ENCODE measurements at regions of chr2 and their contacts with region 1.

Region 1: GRCh38 chr2:8836971-8837794 is at the start of gene KIDINS220:
- DNase-seq: peak; percentile 85 to 93
- H3K4me3 ChIP-seq: peak within 1 kb of the TSS; percentile 87 to 92
- H3K27ac ChIP-seq: peak within 1 kb of the TSS; percentile 87 to 89
- H3K4me1 ChIP-seq: peaks cover 0 to 47% (median 21%) of the 10 kb centered on the region in 4 donors
- H3K27me3 ChIP-seq: no peaks in the 10 kb centered on the region
- CTCF ChIP-seq: no peak

Region 2: GRCh38 chr2:8132351-8132831 is 704.8 kb before region 1 on chr2:
- intact Hi-C with region 1: no loop called
- DNase-seq: no peak
- H3K4me3 ChIP-seq: no peak overlapping the region
- H3K27ac ChIP-seq: no peak overlapping the region
- H3K4me1 ChIP-seq: peaks cover 0 to 5% (median 0%) of the 10 kb centered on the region in 4 donors
- H3K27me3 ChIP-seq: no peaks in the 10 kb centered on the region
- CTCF ChIP-seq: no peak

Region 3: DNA sequence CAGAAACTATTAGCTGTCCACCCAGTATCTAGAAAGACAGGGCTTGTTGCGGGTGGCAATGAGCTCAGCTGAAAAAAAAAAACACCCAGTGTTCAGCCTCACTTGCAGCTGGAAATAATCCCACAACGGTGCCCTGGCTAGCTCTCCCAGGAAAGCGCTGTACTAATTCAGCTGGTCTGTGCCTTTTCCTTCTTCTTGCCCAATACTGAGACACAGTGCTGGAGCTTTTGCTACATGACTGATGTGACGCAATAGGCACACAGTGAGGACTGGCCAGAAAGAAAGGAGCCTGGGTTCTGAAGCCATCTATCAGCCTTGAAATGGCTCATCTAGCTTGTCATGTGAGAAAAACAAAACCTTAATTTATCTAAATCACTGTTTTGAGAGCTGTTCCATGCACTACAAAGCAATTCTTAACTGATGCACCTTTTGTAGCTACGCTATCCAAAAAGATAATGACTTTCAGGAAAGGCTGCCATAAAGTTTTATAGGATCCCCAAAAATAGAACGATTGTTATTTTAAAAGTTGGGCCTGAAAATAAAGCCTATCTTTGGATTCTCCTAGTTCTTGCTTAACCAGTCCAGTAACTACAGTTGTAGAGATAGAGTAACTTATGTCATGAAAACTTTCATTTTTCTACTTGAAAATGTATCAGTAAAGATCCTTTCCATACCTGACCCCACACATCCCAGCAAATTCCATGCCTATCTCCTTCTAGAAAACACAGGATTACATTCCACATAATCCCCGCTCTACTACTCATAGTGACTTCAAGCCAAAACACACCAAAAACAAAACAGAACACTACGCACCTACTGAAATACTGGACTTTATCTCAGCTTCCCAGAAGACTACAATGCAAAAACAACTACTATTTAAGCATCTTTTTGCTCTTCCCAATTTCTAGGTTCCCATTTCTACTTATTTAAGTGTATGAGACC is 15.6 kb before region 1 on chr2:
- intact Hi-C with region 1: loop called (anchors 2 kb)
- DNase-seq: peak; percentile 81 to 92
- H3K4me3 ChIP-seq: no peak overlapping the region
- H3K27ac ChIP-seq: peak overlapping the region; percentile 68 to 70
- H3K4me1 ChIP-seq: peaks cover 0 to 26% (median 10%) of the 10 kb centered on the region in 4 donors
- H3K27me3 ChIP-seq: no peaks in the 10 kb centered on the region
- CTCF ChIP-seq: no peak

Region 4: DNA sequence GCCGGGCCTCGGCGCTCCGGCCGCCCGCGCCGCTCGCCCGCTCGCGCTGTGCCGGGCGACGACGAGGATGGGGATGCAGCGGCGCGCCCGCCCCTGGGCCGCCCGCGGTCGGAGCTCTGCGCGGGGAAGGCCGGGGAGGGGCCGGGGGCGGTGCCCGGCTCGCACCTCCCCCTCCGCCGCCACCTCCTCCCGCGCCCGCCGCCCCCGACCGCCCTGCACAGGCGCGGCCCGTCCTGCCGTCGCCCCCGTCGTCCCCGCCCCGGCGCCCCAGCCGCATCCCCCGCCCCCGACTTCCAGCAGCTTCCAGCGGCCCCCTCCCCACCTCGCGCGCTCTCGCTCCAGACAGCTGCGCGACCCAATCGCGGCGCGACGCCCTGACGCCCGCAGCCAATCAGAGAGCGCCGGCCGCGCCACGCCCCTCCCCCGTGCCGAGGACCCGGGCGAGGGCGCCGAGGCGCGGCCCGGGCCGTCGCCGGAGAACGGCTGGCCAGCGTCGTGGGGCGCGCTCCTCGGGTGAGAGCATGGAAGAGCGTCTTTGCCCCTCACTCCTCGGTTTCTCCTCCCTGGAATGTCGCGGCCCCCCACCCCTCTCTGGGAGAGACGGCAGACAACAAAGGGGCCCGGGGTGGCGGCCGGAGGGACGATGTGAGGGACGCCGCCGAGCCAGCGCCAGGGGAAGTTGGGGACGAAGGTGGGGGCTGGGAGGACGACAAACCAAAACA is 166.6 kb after region 1 on chr2 and contains the start of gene MBOAT2:
- intact Hi-C with region 1: loop called (anchors 5 kb)
- DNase-seq: peak; percentile 80 to 90
- H3K4me3 ChIP-seq: peak within 1 kb of the TSS; percentile 66 to 82
- H3K27ac ChIP-seq: peak within 1 kb of the TSS; percentile 87 to 93
- H3K4me1 ChIP-seq: peaks cover 0 to 23% (median 11%) of the 10 kb centered on the region in 4 donors
- H3K27me3 ChIP-seq: no peaks in the 10 kb centered on the region
- CTCF ChIP-seq: no peak

Region 5: DNA sequence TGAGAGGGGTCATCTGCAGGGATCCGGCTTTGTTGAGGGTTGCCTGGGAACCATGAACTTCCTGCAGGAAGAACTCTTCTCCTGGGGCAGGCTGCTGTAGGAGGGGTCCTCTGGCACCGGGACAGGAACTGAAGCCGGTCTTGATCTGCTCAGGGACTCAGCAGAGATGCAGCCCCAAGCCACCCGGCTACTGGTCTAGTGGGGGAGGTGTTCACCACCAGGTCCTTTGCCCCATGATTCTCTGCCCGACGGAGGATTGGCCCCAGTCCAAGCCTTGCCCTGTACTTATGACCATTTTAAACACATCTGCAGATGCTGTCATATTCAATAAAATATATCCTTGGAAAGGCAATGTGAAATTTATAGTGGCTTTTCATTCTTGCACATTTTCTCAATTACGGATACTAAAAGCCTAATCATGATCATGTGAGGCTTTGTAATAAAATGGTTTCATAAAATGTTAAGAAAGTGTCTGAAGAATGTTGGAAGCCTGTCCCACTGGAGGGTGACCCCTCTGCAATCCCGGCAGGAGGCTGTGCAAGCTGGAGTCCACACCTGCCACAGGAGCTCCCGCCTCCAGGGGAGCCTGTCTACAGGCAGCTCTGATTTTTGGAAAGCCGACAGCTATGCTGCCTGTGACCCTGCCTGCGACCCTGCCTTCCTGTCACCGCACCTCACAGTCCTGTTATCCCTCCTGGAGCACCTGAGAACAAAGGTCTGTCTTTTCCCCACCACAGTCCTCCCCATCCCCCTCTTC is 907.3 kb after region 1 on chr2:
- intact Hi-C with region 1: loop called (anchors 5 kb)
- DNase-seq: no peak
- H3K4me3 ChIP-seq: no peak overlapping the region
- H3K27ac ChIP-seq: no peak overlapping the region
- H3K4me1 ChIP-seq: peaks cover 0 to 6% (median 1%) of the 10 kb centered on the region in 4 donors
- H3K27me3 ChIP-seq: no peaks in the 10 kb centered on the region
- CTCF ChIP-seq: no peak